Endothelial cell of umbilical vein (primary cell): ENCODE measurements at regions of chr12 and their contacts with region 1.

Region 1: GRCh38 chr12:124567661-124568373 is 405 bp upstream of the NCOR2 start:
- DNase-seq: peak; percentile 70
- H3K4me3 ChIP-seq: peak overlapping the region; percentile 35 to 86 (median 45)
- H3K27ac ChIP-seq: peak overlapping the region; percentile 43
- H3K4me1 ChIP-seq: peaks cover 10% of the 10 kb centered on the region
- H3K27me3 ChIP-seq: no peaks in the 10 kb centered on the region
- CTCF ChIP-seq: peak in 1 of 2 donors; percentile 12
- POLR2A ChIP-seq: no peak

Region 2: DNA sequence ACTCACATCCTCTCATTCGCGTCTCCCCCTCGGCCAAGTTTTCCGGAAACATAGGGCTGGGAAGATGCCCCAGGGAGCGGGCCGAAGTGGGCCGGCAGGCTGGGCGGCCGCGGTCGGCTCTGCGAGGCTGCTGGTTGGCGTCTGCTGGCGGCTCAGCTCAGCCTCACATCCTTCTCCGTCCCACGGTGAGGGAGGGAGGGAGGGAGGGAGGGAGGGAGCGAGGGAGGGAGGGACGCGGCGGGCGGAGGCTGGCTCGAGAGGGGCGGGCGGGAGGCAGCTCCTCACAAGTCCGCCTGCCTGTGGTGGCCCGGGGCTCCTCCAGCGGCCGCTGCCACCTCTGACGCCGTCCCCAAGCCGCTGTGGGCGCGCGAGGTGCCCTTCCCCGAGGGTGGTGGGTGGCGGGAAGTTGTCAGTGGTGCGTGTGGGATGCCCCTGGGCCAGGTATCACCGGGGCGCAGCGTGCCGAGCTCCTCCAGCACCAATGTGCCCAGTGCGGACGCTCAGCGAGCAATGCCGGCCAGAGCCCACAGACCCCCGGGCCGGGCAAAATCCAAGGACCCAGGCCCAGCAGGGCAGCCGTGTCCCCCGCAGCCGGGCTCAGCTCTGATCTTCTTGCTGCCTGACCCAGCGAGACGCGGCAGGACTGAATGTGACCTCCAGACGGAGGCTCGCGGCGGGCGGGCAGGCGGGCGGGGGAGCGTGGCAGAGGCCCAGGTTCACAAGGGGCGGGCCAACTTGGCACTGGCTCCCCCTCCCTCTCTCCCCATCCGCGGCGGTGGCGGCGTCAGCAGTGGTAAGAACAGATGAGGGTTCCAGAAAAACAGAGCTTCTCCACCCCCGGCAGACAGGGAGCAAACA is 178.9 kb before region 1 on chr12:
- CTCF ChIA-PET with region 1: no interaction called
- POLR2A ChIA-PET with region 1: no interaction called
- dilution Hi-C with region 1: no loop called
- intact Hi-C with region 1: loop called (anchors 2 kb)
- DNase-seq: peak; percentile 87
- H3K4me3 ChIP-seq: peak overlapping the region; percentile 42 to 83 (median 81)
- H3K27ac ChIP-seq: peak overlapping the region; percentile 92
- H3K4me1 ChIP-seq: peaks cover 84% of the 10 kb centered on the region
- H3K27me3 ChIP-seq: no peaks in the 10 kb centered on the region
- CTCF ChIP-seq: no peak
- POLR2A ChIP-seq: peak; percentile 66

Region 3: GRCh38 chr12:124518051-124518932 is 49.5 kb before region 1 on chr12:
- CTCF ChIA-PET with region 1: interaction called, 3 read pairs
- POLR2A ChIA-PET with region 1: no interaction called
- dilution Hi-C with region 1: no loop called
- intact Hi-C with region 1: loop called (anchors 1 kb)
- DNase-seq: peak; percentile 99
- H3K4me3 ChIP-seq: peak overlapping the region in 1 of 3 experiments; percentile 19
- H3K27ac ChIP-seq: peak overlapping the region; percentile 91
- H3K4me1 ChIP-seq: peaks cover 64% of the 10 kb centered on the region
- H3K27me3 ChIP-seq: no peaks in the 10 kb centered on the region
- CTCF ChIP-seq: no peak
- POLR2A ChIP-seq: no peak

Region 4: GRCh38 chr12:124625867-124626675 is 58.3 kb after region 1 on chr12:
- CTCF ChIA-PET with region 1: interaction called, 3 read pairs
- POLR2A ChIA-PET with region 1: no interaction called
- dilution Hi-C with region 1: no loop called
- intact Hi-C with region 1: loop called (anchors 1 kb)
- DNase-seq: peak; percentile 91
- H3K4me3 ChIP-seq: no peak overlapping the region
- H3K27ac ChIP-seq: peak overlapping the region; percentile 91
- H3K4me1 ChIP-seq: peaks cover 26% of the 10 kb centered on the region
- H3K27me3 ChIP-seq: no peaks in the 10 kb centered on the region
- CTCF ChIP-seq: no peak
- POLR2A ChIP-seq: peak; percentile 51

Region 5: DNA sequence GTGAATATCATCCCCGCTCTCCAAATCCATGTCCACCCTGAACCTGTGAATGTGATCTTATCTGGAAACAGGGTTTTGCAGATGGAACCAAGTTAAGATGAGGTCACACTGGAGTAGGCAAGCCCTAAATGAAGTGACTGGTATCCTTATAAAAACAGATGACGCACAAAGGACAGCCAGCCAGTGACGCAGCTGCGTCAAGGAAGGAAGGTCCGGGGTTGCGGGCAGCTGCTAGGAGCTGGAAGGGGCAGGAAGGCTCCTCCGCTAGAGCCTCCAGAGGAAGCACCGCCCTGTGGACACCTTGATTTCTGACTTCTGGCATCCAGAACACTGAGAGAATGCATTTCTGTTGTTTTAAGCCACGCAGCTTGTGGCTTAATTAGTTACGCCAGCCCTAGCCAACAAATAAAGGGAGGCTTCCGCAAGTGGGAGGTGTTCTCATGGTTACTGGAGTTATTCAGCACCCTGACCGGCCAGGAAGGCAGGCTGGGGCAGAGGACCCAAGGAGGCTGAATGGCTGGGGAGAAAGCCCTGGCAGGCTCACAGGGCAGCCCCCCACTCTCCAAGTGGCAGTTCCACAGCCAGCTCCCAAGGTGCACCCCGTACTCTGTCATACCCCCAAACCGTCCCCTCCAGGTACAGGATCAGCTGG is 127.2 kb after region 1 on chr12:
- CTCF ChIA-PET with region 1: interaction called, 3 read pairs
- POLR2A ChIA-PET with region 1: no interaction called
- dilution Hi-C with region 1: loop called (anchors 25 kb)
- intact Hi-C with region 1: loop called (anchors 1 kb)
- DNase-seq: peak; percentile 90
- H3K4me3 ChIP-seq: no peak overlapping the region
- H3K27ac ChIP-seq: peak overlapping the region; percentile 65
- H3K4me1 ChIP-seq: peaks cover 15% of the 10 kb centered on the region
- H3K27me3 ChIP-seq: peaks cover 0 to 1% of the 10 kb centered on the region in 2 experiments
- CTCF ChIP-seq: peak in 1 of 2 donors; percentile 13
- POLR2A ChIP-seq: no peak

Region 6: DNA sequence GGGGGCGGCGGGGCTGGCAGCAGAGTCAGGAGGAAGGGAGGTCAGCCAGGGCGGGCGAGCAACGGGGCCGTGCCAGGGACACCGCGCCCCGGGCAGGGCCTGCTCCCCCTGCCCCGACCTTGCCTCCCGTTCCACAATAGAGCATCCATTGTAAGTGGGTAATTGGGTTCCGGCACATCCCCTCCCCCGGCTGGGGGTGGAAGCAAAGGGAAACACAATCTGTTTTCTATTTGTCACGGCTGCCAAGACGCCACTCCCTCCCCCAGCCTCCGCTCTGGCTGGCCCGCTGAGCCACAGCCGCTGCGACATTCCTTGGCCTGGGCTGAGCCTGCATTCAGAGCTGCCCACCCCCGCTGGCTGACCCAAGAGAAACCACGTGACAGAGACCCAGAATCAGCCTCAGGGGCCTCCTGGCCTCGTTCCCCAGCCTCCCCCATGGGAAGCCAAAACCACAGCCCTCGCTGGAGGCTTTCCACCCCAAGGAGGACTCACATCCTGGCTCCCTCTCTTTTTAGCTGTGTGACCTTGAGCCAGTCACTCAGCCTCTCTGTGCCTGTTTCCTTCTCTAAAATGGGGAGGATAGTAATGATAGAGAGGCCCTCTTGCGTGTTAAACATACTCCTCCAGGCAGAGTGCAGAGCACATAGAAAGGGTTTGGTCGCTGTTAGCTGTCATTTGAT is 178.2 kb after region 1 on chr12:
- CTCF ChIA-PET with region 1: interaction called, 4 read pairs
- POLR2A ChIA-PET with region 1: no interaction called
- dilution Hi-C with region 1: no loop called
- intact Hi-C with region 1: loop called (anchors 5 kb)
- DNase-seq: peak; percentile 94
- H3K4me3 ChIP-seq: no peak overlapping the region
- H3K27ac ChIP-seq: peak overlapping the region; percentile 78
- H3K4me1 ChIP-seq: peaks cover 31% of the 10 kb centered on the region
- H3K27me3 ChIP-seq: no peaks in the 10 kb centered on the region
- CTCF ChIP-seq: no peak
- POLR2A ChIP-seq: peak; percentile 45

Region 7: GRCh38 chr12:125079648-125080645 is 512.1 kb after region 1 on chr12:
- CTCF ChIA-PET with region 1: no interaction called
- POLR2A ChIA-PET with region 1: no interaction called
- dilution Hi-C with region 1: no loop called
- intact Hi-C with region 1: no loop called
- DNase-seq: no peak
- H3K4me3 ChIP-seq: no peak overlapping the region
- H3K27ac ChIP-seq: no peak overlapping the region
- H3K4me1 ChIP-seq: no peaks in the 10 kb centered on the region
- H3K27me3 ChIP-seq: no peaks in the 10 kb centered on the region
- CTCF ChIP-seq: no peak
- POLR2A ChIP-seq: no peak